ENCODE measurements at regions of chr1 and their contacts with region 1.

Region 1: GRCh38 chr1:205977402-205978014 is 25.7 kb downstream of the RAB7B start:
- DNase-seq: peak; percentile 83
- ATAC-seq: peak; percentile 84
- H3K4me3 ChIP-seq: no peak overlapping the region
- H3K4me3 Mint-ChIP-seq: no peak overlapping the region
- H3K27ac ChIP-seq: no peak overlapping the region
- H3K27ac Mint-ChIP-seq: no peak overlapping the region
- H3K4me1 ChIP-seq: no peaks in the 10 kb centered on the region
- H3K4me1 Mint-ChIP-seq: no peaks in the 10 kb centered on the region
- H3K27me3 ChIP-seq: no peaks in the 10 kb centered on the region
- H3K27me3 Mint-ChIP-seq: peaks cover 2% of the 10 kb centered on the region
- CTCF ChIP-seq: peak; percentile 96

Region 2: DNA sequence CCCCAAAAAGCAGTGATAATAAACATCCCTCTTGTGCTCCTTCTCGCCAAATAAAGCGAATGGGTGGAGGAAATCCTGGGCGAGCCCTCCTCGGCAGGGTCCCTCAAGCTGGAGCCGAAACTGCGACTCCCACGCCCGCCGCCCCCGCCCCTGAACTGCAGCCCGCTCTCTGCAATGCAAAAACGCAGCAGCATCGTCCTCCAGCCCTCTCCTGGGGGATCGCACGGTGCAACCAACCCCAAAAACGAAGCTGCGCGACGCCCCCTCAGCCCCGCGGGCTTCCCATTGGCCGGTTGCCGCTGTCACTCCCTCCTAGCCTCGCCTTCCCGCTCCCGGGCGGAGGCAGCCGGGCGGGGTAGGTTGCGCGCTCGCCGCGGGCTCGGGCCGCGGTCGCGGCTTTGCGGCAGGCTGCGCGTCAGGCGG is 749.9 kb before region 1 on chr1 and contains the start of gene TMCC2:
- CTCF ChIA-PET with region 1: no interaction called
- POLR2A ChIA-PET with region 1: no interaction called
- intact Hi-C with region 1: no loop called
- DNase-seq: peak; percentile 83
- ATAC-seq: peak; percentile 87
- H3K4me3 ChIP-seq: peak within 1 kb of the TSS; percentile 21 to 73 (median 59)
- H3K4me3 Mint-ChIP-seq: peak within 1 kb of the TSS; percentile 97
- H3K27ac ChIP-seq: no peak within 1 kb of the TSS
- H3K27ac Mint-ChIP-seq: peak within 1 kb of the TSS; percentile 77
- H3K4me1 ChIP-seq: peaks cover 17 to 33% of the 10 kb centered on the region in 2 donors
- H3K4me1 Mint-ChIP-seq: peaks cover 30% of the 10 kb centered on the region
- H3K27me3 ChIP-seq: peaks cover 0 to 14% (median 2%) of the 10 kb centered on the region in 4 experiments
- H3K27me3 Mint-ChIP-seq: peaks cover 21% of the 10 kb centered on the region
- CTCF ChIP-seq: no peak
- total RNA-seq, gene TMCC2: 3.3 and 4.0 TPM in 2 replicates

Region 3: GRCh38 chr1:205711104-205712020 is 266.1 kb before region 1 on chr1:
- CTCF ChIA-PET with region 1: interaction called, 29 read pairs
- POLR2A ChIA-PET with region 1: no interaction called
- intact Hi-C with region 1: loop called (anchors 5 kb)
- DNase-seq: peak; percentile 87
- ATAC-seq: peak; percentile 96
- H3K4me3 ChIP-seq: no peak overlapping the region
- H3K4me3 Mint-ChIP-seq: no peak overlapping the region
- H3K27ac ChIP-seq: no peak overlapping the region
- H3K27ac Mint-ChIP-seq: peak overlapping the region; percentile 39
- H3K4me1 ChIP-seq: peaks cover 13 to 16% of the 10 kb centered on the region in 2 donors
- H3K4me1 Mint-ChIP-seq: peaks cover 22% of the 10 kb centered on the region
- H3K27me3 ChIP-seq: no peaks in the 10 kb centered on the region
- H3K27me3 Mint-ChIP-seq: no peaks in the 10 kb centered on the region
- CTCF ChIP-seq: peak; percentile 95

Region 4: GRCh38 chr1:205849619-205850355 is 127.7 kb before region 1 on chr1 and contains the start of gene PM20D1:
- CTCF ChIA-PET with region 1: interaction called, 11 read pairs
- POLR2A ChIA-PET with region 1: no interaction called
- intact Hi-C with region 1: no loop called
- DNase-seq: peak; percentile 91
- ATAC-seq: peak; percentile 99
- H3K4me3 ChIP-seq: peak within 1 kb of the TSS in 4 of 5 experiments; percentile 57 to 65 (median 62)
- H3K4me3 Mint-ChIP-seq: peak within 1 kb of the TSS; percentile 96
- H3K27ac ChIP-seq: peak within 1 kb of the TSS; percentile 70 to 88
- H3K27ac Mint-ChIP-seq: peak within 1 kb of the TSS; percentile 96
- H3K4me1 ChIP-seq: peaks cover 7 to 9% of the 10 kb centered on the region in 2 donors
- H3K4me1 Mint-ChIP-seq: peaks cover 15% of the 10 kb centered on the region
- H3K27me3 ChIP-seq: no peaks in the 10 kb centered on the region
- H3K27me3 Mint-ChIP-seq: no peaks in the 10 kb centered on the region
- CTCF ChIP-seq: no peak
- total RNA-seq, gene PM20D1: 2.3 and 3.3 TPM in 2 replicates

Region 5: GRCh38 chr1:205991237-205991636 is 13.7 kb after region 1 on chr1:
- CTCF ChIA-PET with region 1: interaction called, 28 read pairs
- POLR2A ChIA-PET with region 1: no interaction called
- intact Hi-C with region 1: no loop called
- DNase-seq: no peak
- ATAC-seq: no peak
- H3K4me3 ChIP-seq: no peak overlapping the region
- H3K4me3 Mint-ChIP-seq: no peak overlapping the region
- H3K27ac ChIP-seq: no peak overlapping the region
- H3K27ac Mint-ChIP-seq: no peak overlapping the region
- H3K4me1 ChIP-seq: no peaks in the 10 kb centered on the region
- H3K4me1 Mint-ChIP-seq: no peaks in the 10 kb centered on the region
- H3K27me3 ChIP-seq: peaks cover 0 to 6% (median 2%) of the 10 kb centered on the region in 4 experiments
- H3K27me3 Mint-ChIP-seq: peaks cover 18% of the 10 kb centered on the region
- CTCF ChIP-seq: no peak

Region 6: GRCh38 chr1:206106328-206107167 is 129.0 kb after region 1 on chr1:
- CTCF ChIA-PET with region 1: interaction called, 235 read pairs
- POLR2A ChIA-PET with region 1: no interaction called
- intact Hi-C with region 1: loop called (anchors 2 kb)
- DNase-seq: peak; percentile 88
- ATAC-seq: peak; percentile 92
- H3K4me3 ChIP-seq: no peak overlapping the region
- H3K4me3 Mint-ChIP-seq: no peak overlapping the region
- H3K27ac ChIP-seq: no peak overlapping the region
- H3K27ac Mint-ChIP-seq: peak overlapping the region; percentile 60
- H3K4me1 ChIP-seq: peaks cover 12% of the 10 kb centered on the region in 2 donors
- H3K4me1 Mint-ChIP-seq: peaks cover 28% of the 10 kb centered on the region
- H3K27me3 ChIP-seq: no peaks in the 10 kb centered on the region
- H3K27me3 Mint-ChIP-seq: no peaks in the 10 kb centered on the region
- CTCF ChIP-seq: peak; percentile 94

Region 7: GRCh38 chr1:206761159-206761768 is 783.8 kb after region 1 on chr1:
- CTCF ChIA-PET with region 1: no interaction called
- POLR2A ChIA-PET with region 1: no interaction called
- intact Hi-C with region 1: no loop called
- DNase-seq: no peak
- ATAC-seq: no peak
- H3K4me3 ChIP-seq: no peak overlapping the region
- H3K4me3 Mint-ChIP-seq: no peak overlapping the region
- H3K27ac ChIP-seq: no peak overlapping the region
- H3K27ac Mint-ChIP-seq: no peak overlapping the region
- H3K4me1 ChIP-seq: peaks cover 13 to 16% of the 10 kb centered on the region in 2 donors
- H3K4me1 Mint-ChIP-seq: peaks cover 8% of the 10 kb centered on the region
- H3K27me3 ChIP-seq: no peaks in the 10 kb centered on the region
- H3K27me3 Mint-ChIP-seq: no peaks in the 10 kb centered on the region
- CTCF ChIP-seq: no peak

Region 8: GRCh38 chr1:206808615-206809014 is 831.1 kb after region 1 on chr1:
- CTCF ChIA-PET with region 1: no interaction called
- POLR2A ChIA-PET with region 1: no interaction called
- intact Hi-C with region 1: no loop called
- DNase-seq: peak; percentile 62
- ATAC-seq: peak; percentile 81
- H3K4me3 ChIP-seq: no peak overlapping the region
- H3K4me3 Mint-ChIP-seq: no peak overlapping the region
- H3K27ac ChIP-seq: no peak overlapping the region
- H3K27ac Mint-ChIP-seq: no peak overlapping the region
- H3K4me1 ChIP-seq: peaks cover 8 to 12% of the 10 kb centered on the region in 2 donors
- H3K4me1 Mint-ChIP-seq: peaks cover 27% of the 10 kb centered on the region
- H3K27me3 ChIP-seq: no peaks in the 10 kb centered on the region
- H3K27me3 Mint-ChIP-seq: no peaks in the 10 kb centered on the region
- CTCF ChIP-seq: peak; percentile 50